ENCODE measurements at regions of chr3 and their contacts with region 1.

Region 1: GRCh38 chr3:106206146-106206545 is 337.3 kb upstream of the CBLB start:
- DNase-seq: peak; percentile 31
- ATAC-seq: peak; percentile 67
- H3K4me3 Mint-ChIP-seq: peak overlapping the region; percentile 65
- H3K27ac Mint-ChIP-seq: peak overlapping the region; percentile 94
- H3K4me1 Mint-ChIP-seq: peaks cover 50% of the 10 kb centered on the region
- H3K27me3 Mint-ChIP-seq: no peaks in the 10 kb centered on the region

Region 2: GRCh38 chr3:105686278-105686897 is 519.8 kb before region 1 on chr3:
- CTCF ChIA-PET with region 1: no interaction called
- POLR2A ChIA-PET with region 1: no interaction called
- intact Hi-C with region 1: loop called (anchors 2 to 10 kb)
- DNase-seq: no peak
- ATAC-seq: no peak
- H3K4me3 Mint-ChIP-seq: no peak overlapping the region
- H3K27ac Mint-ChIP-seq: peak overlapping the region; percentile 42
- H3K4me1 Mint-ChIP-seq: peaks cover 24% of the 10 kb centered on the region
- H3K27me3 Mint-ChIP-seq: no peaks in the 10 kb centered on the region

Region 3: DNA sequence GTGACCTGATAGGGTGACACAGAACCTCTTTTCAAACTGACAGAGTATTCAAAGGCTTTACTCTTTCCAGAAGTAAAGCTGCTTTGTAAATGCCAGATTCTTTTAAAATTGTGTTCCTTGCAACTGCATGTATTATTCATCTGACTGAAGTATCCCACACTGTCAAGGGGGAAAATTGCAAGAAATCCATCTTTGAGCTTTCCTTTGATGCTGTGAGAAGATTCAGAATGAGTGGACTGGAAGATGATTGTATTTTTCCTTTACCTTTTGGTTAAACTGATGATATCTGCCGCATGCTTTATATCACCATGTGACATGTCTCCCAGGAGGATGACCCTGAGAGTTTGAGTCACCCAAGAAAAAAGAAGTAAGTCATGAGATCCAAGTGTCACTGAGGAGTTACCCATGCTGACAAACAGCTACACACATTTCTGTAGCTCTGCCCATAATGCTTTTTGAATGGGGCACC is 86.5 kb before region 1 on chr3:
- CTCF ChIA-PET with region 1: no interaction called
- POLR2A ChIA-PET with region 1: no interaction called
- intact Hi-C with region 1: loop called in 1 of 2 experiments (anchors 2 kb)
- DNase-seq: peak; percentile 28
- ATAC-seq: peak; percentile 99
- H3K4me3 Mint-ChIP-seq: no peak overlapping the region
- H3K27ac Mint-ChIP-seq: peak overlapping the region; percentile 83
- H3K4me1 Mint-ChIP-seq: peaks cover 26% of the 10 kb centered on the region
- H3K27me3 Mint-ChIP-seq: no peaks in the 10 kb centered on the region

Region 4: DNA sequence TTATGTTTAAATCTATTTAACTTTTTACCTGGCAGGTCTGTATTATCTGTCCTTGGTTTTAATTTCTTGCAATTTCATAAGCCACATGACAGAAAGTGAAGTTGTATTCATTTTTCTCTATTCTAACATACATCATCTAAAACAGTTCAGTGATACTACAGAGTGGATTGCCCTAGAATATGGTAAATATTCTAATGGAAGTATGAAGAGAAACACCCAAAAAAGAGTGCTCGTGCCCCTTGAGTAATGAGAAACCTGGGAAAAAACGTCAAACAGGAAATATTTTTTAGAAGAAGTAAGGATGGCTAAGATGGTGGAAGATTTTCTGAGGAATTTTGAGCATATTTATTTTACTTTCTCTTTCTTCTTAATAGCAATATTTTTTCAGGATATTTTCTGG is 76.2 kb before region 1 on chr3:
- CTCF ChIA-PET with region 1: no interaction called
- POLR2A ChIA-PET with region 1: no interaction called
- intact Hi-C with region 1: loop called in 1 of 2 experiments (anchors 2 kb)
- DNase-seq: no peak
- ATAC-seq: no peak
- H3K4me3 Mint-ChIP-seq: no peak overlapping the region
- H3K27ac Mint-ChIP-seq: peak overlapping the region; percentile 48
- H3K4me1 Mint-ChIP-seq: peaks cover 18% of the 10 kb centered on the region
- H3K27me3 Mint-ChIP-seq: no peaks in the 10 kb centered on the region

Region 5: GRCh38 chr3:106183762-106184391 is 22.3 kb before region 1 on chr3:
- CTCF ChIA-PET with region 1: interaction called, 3 read pairs
- POLR2A ChIA-PET with region 1: no interaction called
- intact Hi-C with region 1: loop called in 1 of 2 experiments (anchors 2 kb)
- DNase-seq: no peak
- ATAC-seq: peak; percentile 33
- H3K4me3 Mint-ChIP-seq: no peak overlapping the region
- H3K27ac Mint-ChIP-seq: peak overlapping the region; percentile 49
- H3K4me1 Mint-ChIP-seq: peaks cover 41% of the 10 kb centered on the region
- H3K27me3 Mint-ChIP-seq: no peaks in the 10 kb centered on the region

Region 6: GRCh38 chr3:106190296-106190695 is 15.8 kb before region 1 on chr3:
- CTCF ChIA-PET with region 1: interaction called, 3 read pairs
- POLR2A ChIA-PET with region 1: no interaction called
- intact Hi-C with region 1: loop called in 1 of 2 experiments (anchors 1 kb)
- DNase-seq: no peak
- ATAC-seq: no peak
- H3K4me3 Mint-ChIP-seq: no peak overlapping the region
- H3K27ac Mint-ChIP-seq: no peak overlapping the region
- H3K4me1 Mint-ChIP-seq: peaks cover 18% of the 10 kb centered on the region
- H3K27me3 Mint-ChIP-seq: no peaks in the 10 kb centered on the region

Measured in activated CD4-positive, alpha-beta T cell treated with anti-CD3 and anti-CD28 coated beads for 36 hours (primary cell).